Activated CD4-positive, alpha-beta T cell treated with anti-CD3 and anti-CD28 coated beads for 36 hours (primary cell): ENCODE measurements at regions of chr7 and their contacts with region 1.

Region 1: DNA sequence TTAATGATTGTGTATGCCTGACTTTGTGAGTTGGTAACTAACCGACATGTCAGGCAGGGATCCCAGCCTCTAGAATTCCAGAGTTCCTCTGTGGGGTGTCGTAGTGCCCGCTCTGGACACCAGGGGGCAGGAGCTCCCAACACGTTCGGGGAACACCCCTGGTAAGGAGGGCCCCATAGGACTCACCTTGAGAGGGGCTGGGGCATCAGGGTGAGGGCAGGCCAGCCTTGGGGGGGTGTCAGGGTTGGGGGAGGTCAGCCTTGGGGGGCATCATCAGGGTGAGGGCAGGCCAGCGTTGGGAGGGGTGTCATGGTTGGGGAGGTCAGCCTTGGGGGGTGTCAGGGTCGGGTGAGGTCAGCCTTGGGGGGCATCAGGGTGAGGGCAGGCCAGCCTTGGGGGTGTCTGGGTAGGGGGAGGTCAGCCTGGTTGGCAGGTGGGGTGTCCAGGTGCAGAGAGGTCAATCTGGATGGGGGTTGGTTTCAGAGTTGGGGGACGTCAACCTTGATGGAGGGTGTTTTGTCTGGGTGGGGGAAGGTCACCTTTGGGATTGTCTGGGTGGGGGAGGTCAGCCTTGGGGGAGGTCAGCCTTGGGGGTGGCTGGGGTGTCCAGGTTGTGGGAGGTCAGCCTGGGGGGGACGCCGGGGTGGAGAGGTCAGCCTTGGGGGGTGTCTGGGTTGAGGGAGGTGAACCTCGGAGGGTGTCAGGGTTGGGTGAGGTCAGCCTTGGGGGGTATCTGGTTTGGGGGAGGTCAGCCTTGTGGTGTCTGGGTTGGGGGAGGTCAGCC is 45.6 kb upstream of the SUN1 start:
- DNase-seq: peak; percentile 84
- ATAC-seq: peak; percentile 91
- H3K4me3 Mint-ChIP-seq: no peak overlapping the region
- H3K27ac Mint-ChIP-seq: no peak overlapping the region
- H3K4me1 Mint-ChIP-seq: no peaks in the 10 kb centered on the region
- H3K27me3 Mint-ChIP-seq: no peaks in the 10 kb centered on the region

Region 2: DNA sequence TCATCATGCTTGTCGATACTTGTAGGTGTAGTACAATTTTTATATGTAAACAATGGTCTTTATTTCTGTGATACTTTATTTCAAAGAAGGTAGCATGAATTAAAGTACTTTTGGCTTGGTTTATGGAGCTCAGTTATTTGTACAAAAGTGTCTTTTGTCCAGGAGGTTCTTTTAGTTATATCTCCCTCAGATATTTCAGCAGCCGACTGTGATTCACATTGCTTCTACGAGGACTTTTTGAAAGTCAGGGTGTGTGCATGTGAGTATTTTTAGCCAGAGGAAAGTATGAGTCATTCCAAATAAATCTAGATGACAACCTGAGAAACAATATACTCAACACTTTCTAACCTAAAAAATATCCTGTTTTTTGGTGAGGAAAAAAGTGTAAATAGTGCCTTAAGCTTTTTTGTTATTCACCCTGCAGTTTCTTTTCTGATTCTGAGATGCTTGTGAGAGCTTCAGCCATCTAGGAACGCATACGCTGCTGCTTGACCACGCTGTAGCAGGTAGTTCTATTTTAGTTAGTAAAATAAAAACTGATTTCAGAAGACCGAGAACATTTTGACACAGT is 45.0 kb after region 1 on chr7:
- CTCF ChIA-PET with region 1: interaction called, 7 read pairs
- POLR2A ChIA-PET with region 1: no interaction called
- intact Hi-C with region 1: loop called in 1 of 2 experiments (anchors 1 kb)
- DNase-seq: no peak
- ATAC-seq: peak; percentile 69
- H3K4me3 Mint-ChIP-seq: peak overlapping the region; percentile 63
- H3K27ac Mint-ChIP-seq: peak overlapping the region; percentile 98
- H3K4me1 Mint-ChIP-seq: peaks cover 64% of the 10 kb centered on the region
- H3K27me3 Mint-ChIP-seq: no peaks in the 10 kb centered on the region